ENCODE measurements at regions of chr5 and their contacts with region 1.

Region 1: GRCh38 chr5:57137401-57137800 is 36.5 kb upstream of the GPBP1 start:
- DNase-seq: no peak
- ATAC-seq: no peak

Region 2: GRCh38 chr5:56900858-56901578 is 236.4 kb before region 1 on chr5:
- intact Hi-C with region 1: loop called in 1 of 2 experiments (anchors 5 kb)
- DNase-seq: no peak
- ATAC-seq: peak; percentile 57 to 63